ENCODE measurements at regions of chr5 and their contacts with region 1.

Region 1: DNA sequence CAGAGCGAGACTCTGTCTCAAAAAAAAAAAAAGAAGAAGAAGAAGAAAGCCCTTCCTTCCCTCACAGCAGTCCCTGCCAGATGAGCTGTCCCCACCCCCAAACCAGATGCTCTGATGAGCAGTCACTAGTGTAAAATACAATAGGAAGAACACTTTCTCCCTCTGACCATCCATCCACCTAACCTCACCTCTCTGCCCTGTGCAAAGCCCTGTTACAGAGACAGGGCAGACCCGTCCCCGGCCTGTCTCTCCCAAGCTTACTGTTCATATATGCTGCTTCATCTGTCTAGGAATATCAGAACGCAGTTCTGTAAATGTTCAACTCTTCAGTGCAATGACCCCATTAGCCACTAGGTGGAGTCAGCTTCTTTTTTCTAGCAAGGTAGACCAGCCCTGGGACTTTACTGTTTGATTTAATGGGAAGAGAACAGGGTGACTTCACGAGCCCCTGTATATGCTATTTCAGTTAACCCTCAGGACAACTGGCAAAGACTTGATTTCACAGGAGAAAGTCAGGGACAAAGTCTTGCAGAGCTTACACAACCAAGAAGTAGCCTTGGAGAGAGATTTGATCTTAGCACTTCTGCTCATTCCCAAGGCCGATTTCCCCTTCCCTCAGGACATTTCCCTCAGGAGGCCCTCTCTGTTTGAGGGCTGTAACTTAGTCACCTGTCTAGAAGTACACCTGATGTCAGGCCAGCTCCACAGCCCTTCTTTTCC is 14.9 kb upstream of the FGFR4 start:
- DNase-seq: peak in 1 of 3 donors; percentile 74
- ATAC-seq: peak; percentile 87 to 93 (median 90)
- H3K4me3 ChIP-seq: no peak overlapping the region
- H3K27ac ChIP-seq: no peak overlapping the region
- H3K4me1 ChIP-seq: peaks cover 0 to 11% (median 2%) of the 10 kb centered on the region in 4 donors
- H3K27me3 ChIP-seq: no peaks in the 10 kb centered on the region
- CTCF ChIP-seq: peak; percentile 83 to 94 (median 89)
- POLR2A ChIP-seq: no peak

Region 2: GRCh38 chr5:177113566-177114424 is 42.0 kb after region 1 on chr5:
- intact Hi-C with region 1: loop called (anchors 5 kb)
- DNase-seq: peak; percentile 72 to 80 (median 76)
- ATAC-seq: peak; percentile 74 to 84 (median 82)
- H3K4me3 ChIP-seq: peak overlapping the region in 1 of 3 donors; percentile 47
- H3K27ac ChIP-seq: peak overlapping the region in 2 of 3 donors; percentile 53 to 78
- H3K4me1 ChIP-seq: peaks cover 0 to 31% (median 6%) of the 10 kb centered on the region in 4 donors
- H3K27me3 ChIP-seq: no peaks in the 10 kb centered on the region
- CTCF ChIP-seq: peak; percentile 97 to 99 (median 98)
- POLR2A ChIP-seq: no peak

Region 3: DNA sequence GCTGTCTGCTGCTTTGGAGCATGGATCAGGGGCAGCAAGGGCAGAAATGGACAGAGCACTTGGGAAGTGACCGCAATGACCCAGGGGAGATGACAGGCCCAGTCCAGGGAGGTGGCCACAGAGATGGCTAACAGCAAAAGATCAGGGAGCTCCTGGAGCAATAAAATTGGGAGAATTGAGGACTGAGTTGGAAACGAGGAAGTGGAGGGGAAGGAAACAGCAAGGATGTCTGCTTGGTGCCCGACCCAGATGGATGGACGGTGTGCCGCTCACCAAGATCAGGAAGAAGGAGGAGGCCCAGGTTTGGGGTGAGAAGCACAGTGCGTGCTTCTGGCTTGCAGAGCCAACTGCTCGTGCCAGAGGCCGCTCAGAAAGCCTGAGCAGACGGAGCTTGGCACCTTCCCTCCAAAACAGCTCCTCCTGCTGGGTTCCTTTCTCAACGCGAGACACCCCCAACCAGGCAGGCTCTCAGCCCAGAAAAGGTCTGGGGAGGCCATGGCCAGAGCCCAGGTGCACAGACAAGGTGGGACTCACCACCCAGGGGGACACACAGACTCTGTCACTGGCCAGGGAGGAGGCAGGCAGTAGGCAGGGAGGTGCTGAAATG is 310.7 kb after region 1 on chr5:
- intact Hi-C with region 1: no loop called
- DNase-seq: peak; percentile 57 to 75 (median 72)
- ATAC-seq: peak; percentile 50 to 64 (median 56)
- H3K4me3 ChIP-seq: no peak overlapping the region
- H3K27ac ChIP-seq: peak overlapping the region in 1 of 3 donors; percentile 43
- H3K4me1 ChIP-seq: peaks cover 0 to 41% (median 15%) of the 10 kb centered on the region in 4 donors
- H3K27me3 ChIP-seq: no peaks in the 10 kb centered on the region
- CTCF ChIP-seq: peak; percentile 28 to 59 (median 42)
- POLR2A ChIP-seq: no peak

Measured in right lobe of liver (tissue), 6 donors.